GM18951 (cell line): ENCODE measurements at regions of chr3 and their contacts with region 1.

Region 1: GRCh38 chr3:197256836-197257444 is 41.5 kb downstream of the DLG1 start:
- POLR2A ChIP-seq: no peak

Region 2: DNA sequence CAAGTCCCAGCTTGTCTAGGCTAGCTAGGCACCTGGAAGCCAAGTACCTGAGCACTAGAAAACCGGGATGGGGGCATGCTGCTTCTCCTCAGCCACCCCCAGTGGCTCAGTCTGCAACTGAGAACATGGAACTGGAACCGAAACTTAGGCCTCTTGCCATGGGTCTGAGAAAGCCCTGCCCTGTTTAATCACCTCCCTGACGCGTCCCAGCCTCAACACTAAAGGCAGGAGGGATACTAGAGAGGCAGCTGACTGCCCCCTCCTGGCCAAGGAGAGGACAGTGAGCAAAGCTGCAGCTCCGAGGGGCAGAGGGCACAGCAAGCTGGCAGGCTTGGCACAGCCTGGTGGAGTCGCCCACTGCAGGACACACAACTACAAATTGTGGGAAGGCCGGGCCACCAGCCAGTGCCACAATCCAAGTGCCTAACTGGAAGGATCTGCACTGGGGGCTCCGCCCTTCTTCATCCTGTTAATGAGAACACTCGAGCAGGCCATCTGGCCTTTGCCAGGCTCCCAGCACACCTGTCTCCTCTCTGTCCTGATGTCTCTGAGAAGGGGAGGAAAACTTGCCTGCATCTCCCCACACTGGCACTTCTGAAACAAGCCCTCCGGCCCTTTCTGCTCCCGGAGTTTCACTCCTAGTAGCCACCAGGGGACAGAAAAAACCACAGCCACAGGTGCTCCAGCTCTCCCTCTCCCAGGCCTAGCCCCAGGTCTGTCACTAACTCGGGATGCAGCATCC is 245.1 kb after region 1 on chr3:
- in situ Hi-C with region 1: loop called (anchors 25 kb)
- POLR2A ChIP-seq: no peak